Panc1 (cell line): ENCODE measurements at regions of chr6 and their contacts with region 1.

Region 1: GRCh38 chr6:125533710-125534397 is 215.6 kb upstream of the HEY2 start:
- DNase-seq: no peak
- ATAC-seq: peak; percentile 48; the same call in 1 of the 2 replicates
- H3K4me3 ChIP-seq: peak overlapping the region in 1 of 2 experiments; percentile 29; a peak in 2 of 4 replicates
- H3K27ac ChIP-seq: no peak overlapping the region
- H3K4me1 ChIP-seq: 0 out of 2 replicates have a peak, but pooled peaks cover 3% of the 10 kb centered on the region
- H3K27me3 ChIP-seq: peaks cover 33% of the 10 kb centered on the region
- CTCF ChIP-seq: no peak

Region 2: GRCh38 chr6:125749173-125749864 is 215.5 kb after region 1 on chr6 and contains the start of gene HEY2:
- CTCF ChIA-PET with region 1: no interaction called
- POLR2A ChIA-PET with region 1: no interaction called
- in situ Hi-C with region 1: no loop called
- intact Hi-C with region 1: loop called (anchors 5 kb)
- DNase-seq: no peak
- ATAC-seq: peak; percentile 95
- H3K4me3 ChIP-seq: peak within 1 kb of the TSS; percentile 65 to 74
- H3K27ac ChIP-seq: no peak within 1 kb of the TSS
- H3K4me1 ChIP-seq: peaks cover 27% of the 10 kb centered on the region
- H3K27me3 ChIP-seq: peaks cover 79% of the 10 kb centered on the region
- CTCF ChIP-seq: no peak
- total RNA-seq, gene HEY2: not detected

Region 3: DNA sequence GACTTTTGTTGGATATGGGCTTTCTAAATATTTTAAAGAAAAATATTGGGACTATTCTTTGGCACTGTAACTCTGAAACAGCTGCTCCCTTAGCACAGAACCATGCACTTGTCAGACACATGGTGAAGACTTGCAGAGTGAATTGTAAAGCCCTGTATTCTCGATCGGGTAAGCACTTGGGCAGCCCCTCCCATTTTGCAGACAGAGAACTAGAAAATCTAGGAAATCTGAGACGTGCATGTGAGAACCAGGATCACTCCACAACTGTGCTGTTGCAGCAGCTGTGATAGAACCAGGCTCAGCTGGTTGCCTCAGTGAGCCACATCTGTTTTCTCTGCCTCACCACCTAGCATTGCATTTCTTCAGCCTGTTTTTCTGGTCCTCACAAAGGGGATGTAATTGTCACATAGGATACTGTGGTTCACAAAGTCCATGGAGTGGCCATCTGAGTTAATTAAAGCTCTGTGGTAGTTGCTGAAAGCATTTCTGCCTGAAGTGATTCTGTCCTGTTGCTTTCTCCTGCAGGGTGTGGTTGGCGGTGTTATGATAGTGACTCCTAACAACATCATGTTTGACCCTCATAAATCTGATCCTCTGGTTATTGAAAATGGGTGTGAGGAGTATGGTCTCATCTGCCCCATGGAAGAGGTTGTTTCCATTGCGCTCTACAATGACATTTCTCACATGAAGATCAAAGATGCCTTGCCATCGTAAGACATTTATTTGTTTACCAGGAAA is 350.9 kb after region 1 on chr6:
- CTCF ChIA-PET with region 1: no interaction called
- POLR2A ChIA-PET with region 1: no interaction called
- in situ Hi-C with region 1: no loop called
- intact Hi-C with region 1: no loop called
- DNase-seq: no peak
- ATAC-seq: no peak
- H3K4me3 ChIP-seq: no peak overlapping the region
- H3K27ac ChIP-seq: no peak overlapping the region
- H3K4me1 ChIP-seq: no peaks in the 10 kb centered on the region
- H3K27me3 ChIP-seq: no peaks in the 10 kb centered on the region
- CTCF ChIP-seq: no peak